ENCODE measurements at regions of chr13 and their contacts with region 1.

Region 1: GRCh38 chr13:27171827-27172494 is 350 bp upstream of the USP12 start:
- DNase-seq: peak; percentile 65 to 95 (median 90)

Region 2: GRCh38 chr13:27251166-27252091 is 79.5 kb after region 1 on chr13 and contains the start of gene RPL21:
- intact Hi-C with region 1: loop called (anchors 2 kb)
- DNase-seq: peak; percentile 92 to 98 (median 96)

Region 3: DNA sequence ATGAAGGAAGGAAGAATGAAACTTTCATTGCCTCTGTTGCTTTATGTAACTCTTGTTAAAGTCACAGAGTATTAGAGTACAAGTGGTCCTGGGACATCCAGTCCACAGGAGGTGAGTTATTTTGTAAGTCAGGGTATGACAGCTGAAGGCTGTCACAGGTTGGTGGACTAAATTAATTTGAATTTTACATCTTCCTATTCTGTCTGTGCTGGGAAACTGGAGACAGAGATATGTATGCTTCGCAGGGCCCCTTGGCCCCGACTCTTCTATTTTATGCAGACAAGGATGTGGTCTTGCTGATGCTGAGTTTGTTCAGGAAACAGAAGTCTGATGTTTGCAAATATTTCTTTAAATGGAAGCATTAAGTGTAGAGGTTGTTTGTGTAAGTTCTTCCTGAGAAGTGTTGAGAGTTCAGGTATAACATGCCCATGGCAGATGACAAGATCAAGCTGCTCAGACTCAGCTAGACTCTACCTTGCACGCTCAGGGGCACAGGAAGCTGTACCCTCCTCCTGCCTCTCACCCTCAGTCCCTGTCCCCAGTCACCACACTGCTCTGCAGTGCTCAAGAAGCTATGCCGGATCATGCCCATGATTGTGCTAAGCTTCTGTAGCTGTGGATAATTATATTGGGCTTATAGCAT is 122.0 kb after region 1 on chr13:
- intact Hi-C with region 1: no loop called
- DNase-seq: no peak

Region 4: GRCh38 chr13:27607125-27607524 is 435.2 kb after region 1 on chr13:
- intact Hi-C with region 1: no loop called
- DNase-seq: no peak